ENCODE measurements at regions of chr12 and their contacts with region 1.

Region 1: DNA sequence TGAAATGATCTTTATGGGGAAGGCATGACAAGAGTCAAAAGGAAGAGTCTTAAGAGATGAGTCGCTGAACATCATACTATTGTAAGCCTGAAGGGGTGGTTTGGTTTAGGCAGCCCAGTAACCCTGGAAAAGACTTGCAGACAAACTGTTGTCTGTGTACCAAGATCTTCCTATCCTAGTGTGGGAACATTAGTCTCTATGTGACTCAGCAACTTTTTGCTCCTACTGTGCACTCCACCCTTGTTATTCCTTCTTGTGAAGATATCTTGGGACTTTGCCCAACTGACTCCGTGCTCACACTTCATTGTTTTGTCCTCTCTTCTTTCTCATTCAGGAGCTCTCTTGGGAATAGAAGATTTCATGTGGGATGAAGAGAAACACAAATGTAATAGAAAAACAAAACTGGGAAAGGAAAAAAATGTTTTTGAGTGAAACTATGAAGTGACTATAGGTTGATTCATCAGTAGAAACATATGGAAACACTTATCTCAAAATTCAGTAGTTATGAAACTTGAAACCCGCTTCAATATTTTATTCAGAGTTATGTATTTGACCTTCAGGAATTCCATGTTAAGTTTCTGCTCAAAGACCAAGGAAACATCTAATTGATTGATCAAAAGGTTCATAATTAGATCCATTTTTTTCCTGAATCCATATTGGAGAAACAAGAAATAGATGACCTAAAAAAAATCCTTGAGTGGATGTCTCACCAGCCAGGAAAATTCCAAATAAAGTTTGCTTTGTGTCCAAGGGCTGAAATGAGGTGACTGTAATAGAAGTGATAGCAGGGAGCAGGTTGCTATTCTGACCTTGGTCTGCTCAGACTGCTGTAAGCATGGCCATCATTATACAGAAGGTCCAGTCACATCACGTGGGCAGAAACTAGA is 67.2 kb downstream of the BTG1 start:
- DNase-seq: peak; percentile 49
- H3K4me3 Mint-ChIP-seq: no peak overlapping the region
- H3K27ac Mint-ChIP-seq: peak overlapping the region; percentile 77
- H3K4me1 Mint-ChIP-seq: peaks cover 78% of the 10 kb centered on the region
- H3K27me3 Mint-ChIP-seq: no peaks in the 10 kb centered on the region

Region 2: DNA sequence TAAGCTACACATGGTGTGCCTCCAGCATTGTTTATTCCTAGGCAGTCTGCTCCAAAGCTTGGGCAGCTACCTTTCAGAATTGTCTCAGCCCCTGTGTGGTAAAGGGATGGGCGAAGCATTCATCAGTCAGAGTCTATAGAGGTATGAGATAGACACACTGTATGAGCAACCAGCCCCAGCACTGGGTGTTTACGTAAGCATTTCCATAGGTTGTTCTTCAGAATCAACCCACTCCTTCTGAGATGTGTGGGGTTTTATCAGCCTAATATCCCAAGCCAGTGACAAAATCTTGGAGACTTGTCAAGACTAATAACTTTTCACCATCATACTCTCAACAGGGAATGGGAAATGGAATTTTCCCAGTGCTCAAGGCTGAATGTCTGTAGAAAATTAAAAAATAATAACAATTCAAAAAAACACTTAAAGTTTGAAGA is 31.0 kb before region 1 on chr12:
- CTCF ChIA-PET with region 1: interaction called, 3 read pairs
- intact Hi-C with region 1: loop called (anchors 1 kb)
- DNase-seq: peak; percentile 43
- H3K4me3 Mint-ChIP-seq: peak overlapping the region; percentile 56
- H3K27ac Mint-ChIP-seq: peak overlapping the region; percentile 74
- H3K4me1 Mint-ChIP-seq: peaks cover 88% of the 10 kb centered on the region
- H3K27me3 Mint-ChIP-seq: no peaks in the 10 kb centered on the region

Region 3: GRCh38 chr12:92096346-92097136 is 18.1 kb after region 1 on chr12:
- CTCF ChIA-PET with region 1: interaction called, 4 read pairs
- intact Hi-C with region 1: loop called (anchors 1 kb)
- DNase-seq: peak; percentile 56
- H3K4me3 Mint-ChIP-seq: peak overlapping the region; percentile 23
- H3K27ac Mint-ChIP-seq: peak overlapping the region; percentile 89
- H3K4me1 Mint-ChIP-seq: peaks cover 51% of the 10 kb centered on the region
- H3K27me3 Mint-ChIP-seq: no peaks in the 10 kb centered on the region

Region 4: GRCh38 chr12:92111256-92111655 is 32.8 kb after region 1 on chr12:
- CTCF ChIA-PET with region 1: interaction called, 7 read pairs
- intact Hi-C with region 1: loop called (anchors 1 kb)
- DNase-seq: no peak
- H3K4me3 Mint-ChIP-seq: peak overlapping the region; percentile 71
- H3K27ac Mint-ChIP-seq: peak overlapping the region; percentile 91
- H3K4me1 Mint-ChIP-seq: peaks cover 81% of the 10 kb centered on the region
- H3K27me3 Mint-ChIP-seq: no peaks in the 10 kb centered on the region

Region 5: GRCh38 chr12:92136965-92137721 is 58.7 kb after region 1 on chr12:
- CTCF ChIA-PET with region 1: interaction called, 4 read pairs
- intact Hi-C with region 1: loop called (anchors 1 kb)
- DNase-seq: no peak
- H3K4me3 Mint-ChIP-seq: peak overlapping the region; percentile 100
- H3K27ac Mint-ChIP-seq: peak overlapping the region; percentile 99
- H3K4me1 Mint-ChIP-seq: peaks cover 58% of the 10 kb centered on the region
- H3K27me3 Mint-ChIP-seq: no peaks in the 10 kb centered on the region